ENCODE measurements at regions of chr17 and their contacts with region 1.

Region 1: GRCh38 chr17:40582328-40582901 is 17.1 kb upstream of the CCR7 start:
- DNase-seq: peak; percentile 99
- ATAC-seq: peak; percentile 87
- H3K4me3 ChIP-seq: no peak overlapping the region
- H3K27ac ChIP-seq: no peak overlapping the region
- H3K4me1 ChIP-seq: peaks cover 28% of the 10 kb centered on the region
- H3K27me3 ChIP-seq: peaks cover 0 to 4% of the 10 kb centered on the region in 2 experiments; a peak in 1 of 4 replicates
- CTCF ChIP-seq: no peak
- EP300 ChIP-seq: peak; percentile 59 to 60; a peak in 2 of 4 replicates
- POLR2A ChIP-seq: no peak
- RAD21 ChIP-seq: 0 out of 2 replicates have a peak, but pooled peaks have one; percentile 4

Region 2: DNA sequence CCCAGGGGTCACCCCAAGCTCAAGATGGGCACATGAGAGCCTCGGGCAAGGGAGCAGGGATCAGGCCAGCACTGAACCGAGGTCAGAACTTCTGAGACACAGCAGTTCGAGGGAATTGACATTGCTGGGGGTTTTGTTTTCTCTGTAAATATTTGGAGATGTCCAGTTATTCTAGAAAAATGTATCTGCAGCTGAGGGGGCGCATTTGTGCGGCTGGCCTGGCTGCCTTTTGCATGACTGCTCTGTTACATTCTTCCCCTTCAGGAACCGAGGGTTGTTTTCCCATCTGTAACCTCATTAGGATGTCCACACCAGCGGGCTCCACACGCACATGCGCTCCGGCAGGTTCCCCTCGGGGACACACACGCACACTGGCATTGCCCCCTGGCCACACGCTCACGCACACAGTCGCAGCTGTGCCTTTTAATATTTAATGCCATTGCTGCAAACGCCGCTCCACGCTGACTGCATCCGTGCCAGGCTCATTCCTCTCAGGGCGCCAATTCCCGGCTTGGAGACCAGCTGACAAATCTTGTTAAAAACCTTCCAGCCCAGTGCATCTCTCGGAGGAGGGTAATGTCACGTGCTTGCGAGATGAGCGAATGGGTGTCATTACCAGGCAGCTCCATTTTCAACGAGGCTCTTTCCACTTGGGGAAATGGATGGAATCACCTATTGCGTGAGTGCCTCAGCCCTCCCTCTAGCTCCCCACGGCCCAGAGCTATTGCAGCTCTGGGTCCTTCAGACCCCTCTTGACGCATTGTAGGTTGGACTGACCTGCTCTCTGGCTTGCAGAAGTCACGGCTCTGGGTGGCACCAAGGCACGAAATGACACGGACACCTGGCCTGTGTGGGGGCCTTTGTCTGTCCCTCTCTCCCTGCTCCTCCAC is 30.3 kb before region 1 on chr17:
- CTCF ChIA-PET with region 1: interaction called, 4 read pairs
- POLR2A ChIA-PET with region 1: interaction called, 7 read pairs
- RAD21 ChIA-PET with region 1: interaction called, 9 read pairs
- SMC1A ChIA-PET with region 1: interaction called, 11 read pairs
- in situ Hi-C with region 1: no loop called
- intact Hi-C with region 1: no loop called
- DNase-seq: no peak
- ATAC-seq: peak; percentile 5
- H3K4me3 ChIP-seq: no peak overlapping the region
- H3K27ac ChIP-seq: no peak overlapping the region
- H3K4me1 ChIP-seq: peaks cover 45% of the 10 kb centered on the region
- H3K27me3 ChIP-seq: no peaks in the 10 kb centered on the region
- CTCF ChIP-seq: no peak
- EP300 ChIP-seq: no peak
- POLR2A ChIP-seq: peak; percentile 82
- RAD21 ChIP-seq: no peak

Region 3: DNA sequence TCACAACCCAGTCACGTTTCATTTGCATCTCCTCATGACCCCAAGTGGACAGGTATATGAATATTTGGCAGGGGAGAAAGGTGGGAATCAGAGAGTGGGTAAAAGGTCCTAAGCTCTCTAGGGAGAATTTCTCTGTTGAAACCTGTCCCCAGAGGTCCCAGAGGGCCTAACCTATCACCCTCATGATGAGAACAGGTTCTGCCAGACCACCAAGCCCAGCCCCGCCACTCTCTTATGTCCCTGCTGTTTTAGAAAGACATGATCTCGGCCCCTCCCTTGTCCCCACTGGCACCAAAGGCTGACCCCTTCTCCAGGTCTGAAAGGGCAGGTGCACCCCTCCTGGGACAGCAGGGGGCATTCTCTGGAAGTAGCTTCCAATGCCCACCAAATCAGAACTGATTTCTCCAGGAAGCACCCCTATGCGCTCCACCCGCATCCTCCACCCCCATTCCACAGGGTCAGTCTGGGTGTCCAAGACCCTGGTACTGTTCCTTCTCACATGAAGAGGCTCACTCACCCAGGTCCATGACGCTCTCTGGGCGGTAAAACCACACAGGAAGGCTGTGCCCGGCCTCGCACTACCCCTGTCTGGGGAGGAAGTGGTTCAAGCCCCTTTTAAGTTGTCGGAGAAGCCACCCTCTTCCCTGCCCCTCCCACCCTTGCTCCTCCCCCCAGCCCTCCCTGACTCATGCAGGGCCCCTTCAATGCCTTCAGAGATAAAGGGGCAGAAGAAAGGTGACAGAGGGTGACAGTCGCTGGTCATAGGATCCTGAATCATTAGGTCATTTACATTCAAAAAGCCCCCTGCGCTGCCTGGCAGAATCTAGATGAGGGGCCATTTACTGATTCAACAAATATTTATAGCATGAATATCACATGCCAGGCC is 17.3 kb before region 1 on chr17 and contains the start of gene CCR7:
- CTCF ChIA-PET with region 1: interaction called, 40 read pairs
- POLR2A ChIA-PET with region 1: interaction called, 43 read pairs
- RAD21 ChIA-PET with region 1: interaction called, 97 read pairs
- SMC1A ChIA-PET with region 1: interaction called, 112 read pairs
- in situ Hi-C with region 1: no loop called
- intact Hi-C with region 1: loop called (anchors 1 kb)
- DNase-seq: no peak
- ATAC-seq: peak; percentile 44
- H3K4me3 ChIP-seq: peak within 1 kb of the TSS; percentile 93
- H3K27ac ChIP-seq: peak within 1 kb of the TSS; percentile 98
- H3K4me1 ChIP-seq: peaks cover 25% of the 10 kb centered on the region
- H3K27me3 ChIP-seq: no peaks in the 10 kb centered on the region; a peak in 1 of 4 replicates
- CTCF ChIP-seq: peak in 2 of 3 experiments; percentile 16 to 24; a peak in 2 of 6 replicates
- EP300 ChIP-seq: peak; percentile 12 to 51; a peak in 1 of 4 replicates
- POLR2A ChIP-seq: peak; percentile 96
- RAD21 ChIP-seq: 0 out of 2 replicates have a peak, but pooled peaks have one; percentile 7
- polyA plus RNA-seq, gene CCR7: 235 to 294 TPM

Measured in GM12878 (cell line).